Activated CD8-positive, alpha-beta T cell treated with anti-CD3 and anti-CD28 coated beads for 36 hours (primary cell): ENCODE measurements at regions of chr15 and their contacts with region 1.

Region 1: DNA sequence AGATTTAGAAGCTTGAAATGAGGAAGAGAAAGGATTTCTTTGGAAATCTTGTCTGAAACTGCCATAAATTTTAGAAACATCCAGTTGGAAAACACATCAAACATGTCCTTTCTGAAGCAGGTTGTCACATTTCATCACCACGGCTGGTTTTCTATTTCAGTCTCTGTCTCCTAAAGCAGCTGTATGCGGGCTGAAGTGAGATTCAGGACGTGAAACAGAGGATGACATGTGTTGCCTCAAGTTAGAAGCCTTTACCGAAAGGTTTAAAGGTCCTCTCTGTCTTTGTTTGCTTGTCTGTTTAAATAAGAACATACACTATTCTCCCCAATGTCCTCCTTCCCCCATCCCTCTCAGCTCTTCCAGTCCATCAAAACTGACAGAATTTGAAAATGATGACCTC is 141.9 kb downstream of the SQOR start:
- DNase-seq: no peak
- ATAC-seq: no peak
- H3K4me3 Mint-ChIP-seq: no peak overlapping the region
- H3K27ac Mint-ChIP-seq: no peak overlapping the region
- H3K4me1 Mint-ChIP-seq: no peaks in the 10 kb centered on the region
- H3K27me3 Mint-ChIP-seq: peaks cover 13% of the 10 kb centered on the region
- CTCF ChIP-seq: no peak

Region 2: GRCh38 chr15:45795440-45796069 is 18.8 kb after region 1 on chr15:
- CTCF ChIA-PET with region 1: interaction called, 11 read pairs
- POLR2A ChIA-PET with region 1: no interaction called
- intact Hi-C with region 1: no loop called
- DNase-seq: peak; percentile 23
- ATAC-seq: no peak
- H3K4me3 Mint-ChIP-seq: no peak overlapping the region
- H3K27ac Mint-ChIP-seq: no peak overlapping the region
- H3K4me1 Mint-ChIP-seq: no peaks in the 10 kb centered on the region
- H3K27me3 Mint-ChIP-seq: peaks cover 22% of the 10 kb centered on the region
- CTCF ChIP-seq: peak; percentile 65